Psoas muscle (tissue), 8 donors: ENCODE measurements at regions of chrX and their contacts with region 1.

Region 1: GRCh38 chrX:136780763-136781162 is at the start of gene ARHGEF6:
- DNase-seq: no peak
- ATAC-seq: peak; percentile 46 to 69 (median 48)
- H3K4me3 ChIP-seq: peak within 1 kb of the TSS; percentile 63
- H3K27ac ChIP-seq: peak within 1 kb of the TSS; percentile 79
- H3K4me1 ChIP-seq: no peaks in the 10 kb centered on the region
- H3K27me3 ChIP-seq: no peaks in the 10 kb centered on the region
- CTCF ChIP-seq: no peak
- total RNA-seq, gene ARHGEF6: 25.4 to 70.5 (median 53.8) TPM

Region 2: GRCh38 chrX:136450050-136450830 is 330.5 kb before region 1 on chrX:
- intact Hi-C with region 1: no loop called
- DNase-seq: no peak
- ATAC-seq: no peak
- H3K4me3 ChIP-seq: no peak overlapping the region
- H3K27ac ChIP-seq: no peak overlapping the region
- H3K4me1 ChIP-seq: no peaks in the 10 kb centered on the region
- H3K27me3 ChIP-seq: peaks cover 0 to 5% (median 0%) of the 10 kb centered on the region in 3 donors
- CTCF ChIP-seq: no peak

Region 3: DNA sequence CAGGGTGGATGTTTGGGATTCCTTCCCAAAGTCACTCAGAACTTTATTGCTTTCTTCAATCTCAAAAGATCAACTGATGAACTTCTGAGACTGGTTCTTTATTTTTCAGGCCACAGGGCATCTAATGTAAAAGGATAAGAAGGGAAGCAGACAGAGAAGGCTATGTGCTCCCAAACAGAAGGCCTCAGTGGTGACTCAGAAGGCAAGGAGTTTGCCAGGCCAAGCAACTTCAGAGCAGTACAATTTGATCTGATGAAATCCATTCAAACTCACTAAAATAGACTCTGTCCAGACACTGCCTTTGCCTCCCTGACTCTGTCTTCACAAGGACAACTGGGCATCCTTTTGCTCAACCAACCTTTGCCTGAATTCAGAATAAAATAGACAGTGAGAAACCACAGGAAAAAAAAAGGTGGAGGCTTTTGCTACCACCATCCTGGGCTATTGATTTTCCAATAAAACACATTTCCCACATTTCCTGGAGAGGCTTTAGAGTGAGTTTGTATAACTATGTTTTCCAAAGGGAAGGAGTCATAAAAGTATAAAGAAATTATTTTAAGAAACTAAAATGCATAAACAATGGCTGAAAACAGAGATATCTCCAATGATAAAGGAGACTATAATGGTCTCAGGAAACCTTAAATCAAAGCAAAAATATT is 55.2 kb before region 1 on chrX:
- intact Hi-C with region 1: loop called in 1 of 2 experiments (anchors 10 kb)
- DNase-seq: peak; percentile 28 to 61
- ATAC-seq: peak; percentile 92 to 98 (median 96)
- H3K4me3 ChIP-seq: no peak overlapping the region
- H3K27ac ChIP-seq: peak overlapping the region; percentile 49
- H3K4me1 ChIP-seq: peaks cover 16% of the 10 kb centered on the region
- H3K27me3 ChIP-seq: no peaks in the 10 kb centered on the region
- CTCF ChIP-seq: no peak